MCF 10A (cell line): ENCODE measurements at regions of chr2 and their contacts with region 1.

Region 1: GRCh38 chr2:103161456-103162289 is 399.8 kb downstream of the TMEM182 start:
- DNase-seq: peak; percentile 70
- H3K4me3 Mint-ChIP-seq: no peak overlapping the region
- H3K27ac Mint-ChIP-seq: peak overlapping the region; percentile 33
- H3K4me1 Mint-ChIP-seq: peaks cover 11% of the 10 kb centered on the region
- H3K27me3 Mint-ChIP-seq: peaks cover 61% of the 10 kb centered on the region
- CTCF ChIP-seq: peak; percentile 93

Region 2: DNA sequence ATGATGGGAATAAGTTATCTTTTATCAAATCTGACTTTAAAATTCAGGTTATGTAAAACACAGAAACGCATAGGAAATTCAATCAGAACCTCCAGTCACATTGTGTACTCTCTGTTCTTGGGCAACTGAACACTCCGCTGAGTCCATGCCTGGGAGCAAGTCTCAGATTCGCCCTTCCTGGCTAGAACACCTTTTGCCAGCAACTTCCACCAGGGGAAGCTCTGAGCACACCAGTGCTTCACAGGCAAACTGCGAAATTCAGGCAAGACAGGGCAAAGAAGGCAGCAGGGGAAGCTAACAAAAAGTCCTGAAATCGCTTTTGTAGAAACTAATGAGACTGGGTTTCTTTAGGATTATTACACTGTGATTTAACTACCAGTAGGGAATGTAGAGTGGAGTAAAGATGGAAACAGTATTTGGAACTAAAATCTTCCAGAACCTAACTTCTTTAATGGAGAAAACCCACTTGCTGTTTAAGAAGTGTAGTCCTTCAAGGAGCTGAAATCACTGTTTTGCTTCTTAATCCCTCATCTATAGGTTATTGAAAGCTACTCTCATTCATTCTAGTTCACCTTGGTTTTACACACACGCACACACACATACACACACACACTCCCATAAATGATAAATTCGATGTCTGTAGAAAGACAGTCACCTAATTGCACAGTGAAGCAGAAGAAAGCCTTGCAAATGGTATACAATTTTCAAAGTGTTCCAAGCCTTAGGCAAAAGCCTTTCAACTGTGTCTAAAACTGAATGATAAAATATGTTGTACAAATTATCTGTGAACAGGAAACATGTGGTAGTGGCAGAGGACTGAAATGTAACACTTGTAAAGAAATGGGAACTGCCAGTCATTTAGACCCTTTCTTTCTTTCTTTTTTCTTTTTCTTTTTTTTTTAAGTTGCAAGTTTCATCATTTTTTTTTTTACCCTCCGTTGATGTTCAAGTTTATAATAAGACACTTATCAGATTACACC is 185.4 kb before region 1 on chr2:
- CTCF ChIA-PET with region 1: interaction called, 11 read pairs
- POLR2A ChIA-PET with region 1: no interaction called
- intact Hi-C with region 1: loop called (anchors 2 kb)
- DNase-seq: peak; percentile 78
- H3K4me3 Mint-ChIP-seq: no peak overlapping the region
- H3K27ac Mint-ChIP-seq: no peak overlapping the region
- H3K4me1 Mint-ChIP-seq: peaks cover 7% of the 10 kb centered on the region
- H3K27me3 Mint-ChIP-seq: no peaks in the 10 kb centered on the region
- CTCF ChIP-seq: peak; percentile 79

Region 3: DNA sequence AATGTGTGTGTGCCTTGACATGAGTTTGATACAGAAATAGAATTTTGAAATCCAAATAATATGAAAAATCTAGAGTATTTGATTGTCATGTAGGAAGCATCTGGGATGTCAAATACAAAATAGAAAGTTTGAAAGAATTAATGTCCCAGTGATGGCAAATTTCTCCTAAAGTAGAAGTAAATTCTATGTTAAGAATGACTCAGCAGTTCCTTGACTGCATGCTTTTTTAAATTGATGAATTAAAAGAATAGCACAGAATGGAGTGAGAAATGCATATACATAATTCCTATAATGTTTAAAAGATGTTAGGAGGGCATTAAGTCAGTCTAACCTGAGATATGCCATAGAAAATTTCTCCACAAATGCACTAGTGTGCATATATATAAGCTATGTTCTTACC is 42.3 kb before region 1 on chr2:
- CTCF ChIA-PET with region 1: no interaction called
- POLR2A ChIA-PET with region 1: no interaction called
- intact Hi-C with region 1: no loop called
- DNase-seq: no peak
- H3K4me3 Mint-ChIP-seq: no peak overlapping the region
- H3K27ac Mint-ChIP-seq: no peak overlapping the region
- H3K4me1 Mint-ChIP-seq: no peaks in the 10 kb centered on the region
- H3K27me3 Mint-ChIP-seq: peaks cover 53% of the 10 kb centered on the region
- CTCF ChIP-seq: no peak

Region 4: DNA sequence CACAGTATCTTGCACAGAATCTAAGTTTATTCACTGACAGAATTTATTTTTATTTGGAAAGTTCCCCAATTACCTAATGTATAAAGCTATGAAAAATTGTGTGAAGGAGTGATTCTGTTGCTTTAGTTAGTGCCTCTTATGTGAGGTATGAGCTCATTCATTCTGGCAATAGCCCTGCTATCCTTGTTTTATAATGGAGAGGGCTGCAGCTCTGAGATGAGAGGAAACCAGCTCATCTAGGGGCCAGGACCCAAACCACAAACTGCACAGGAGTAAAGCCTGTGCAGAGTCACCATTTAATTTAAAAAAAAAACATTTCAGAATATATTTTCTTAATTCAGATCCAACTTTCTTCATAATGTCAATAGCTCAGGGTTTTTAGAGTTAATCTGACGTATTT is 16.8 kb before region 1 on chr2:
- CTCF ChIA-PET with region 1: interaction called, 20 read pairs
- POLR2A ChIA-PET with region 1: interaction called, 3 read pairs
- intact Hi-C with region 1: no loop called
- DNase-seq: no peak
- H3K4me3 Mint-ChIP-seq: no peak overlapping the region
- H3K27ac Mint-ChIP-seq: no peak overlapping the region
- H3K4me1 Mint-ChIP-seq: no peaks in the 10 kb centered on the region
- H3K27me3 Mint-ChIP-seq: peaks cover 59% of the 10 kb centered on the region
- CTCF ChIP-seq: no peak

Region 5: DNA sequence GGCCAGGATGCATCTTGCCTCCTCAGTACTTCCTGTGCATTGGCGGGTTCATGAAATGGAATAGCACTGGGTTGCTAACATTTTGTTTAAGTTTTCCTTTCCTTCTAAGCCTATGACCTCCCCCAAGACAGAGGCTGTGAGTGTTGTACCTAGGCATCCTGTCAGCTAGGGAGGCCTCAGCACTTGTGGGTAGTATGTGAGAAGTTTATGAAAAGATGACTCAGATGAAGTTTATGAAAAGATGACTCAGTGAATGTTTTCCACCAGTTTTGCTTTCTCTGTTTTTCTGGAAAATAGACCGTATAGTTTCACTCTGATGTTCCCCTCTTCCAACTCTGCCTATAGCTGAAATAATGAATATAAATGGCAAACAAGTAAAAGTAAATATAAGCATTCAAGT is 13.0 kb after region 1 on chr2:
- CTCF ChIA-PET with region 1: interaction called, 15 read pairs
- POLR2A ChIA-PET with region 1: interaction called, 6 read pairs
- intact Hi-C with region 1: no loop called
- DNase-seq: peak; percentile 38
- H3K4me3 Mint-ChIP-seq: no peak overlapping the region
- H3K27ac Mint-ChIP-seq: no peak overlapping the region
- H3K4me1 Mint-ChIP-seq: peaks cover 19% of the 10 kb centered on the region
- H3K27me3 Mint-ChIP-seq: peaks cover 37% of the 10 kb centered on the region
- CTCF ChIP-seq: no peak

Region 6: GRCh38 chr2:103959174-103960128 is 797.8 kb after region 1 on chr2:
- CTCF ChIA-PET with region 1: interaction called, 13 read pairs
- POLR2A ChIA-PET with region 1: no interaction called
- intact Hi-C with region 1: loop called (anchors 1 kb)
- DNase-seq: peak; percentile 50
- H3K4me3 Mint-ChIP-seq: no peak overlapping the region
- H3K27ac Mint-ChIP-seq: no peak overlapping the region
- H3K4me1 Mint-ChIP-seq: no peaks in the 10 kb centered on the region
- H3K27me3 Mint-ChIP-seq: peaks cover 79% of the 10 kb centered on the region
- CTCF ChIP-seq: peak; percentile 65

Region 7: GRCh38 chr2:104849618-104850141 is 1688.0 kb after region 1 on chr2:
- CTCF ChIA-PET with region 1: interaction called, 30 read pairs
- POLR2A ChIA-PET with region 1: no interaction called
- intact Hi-C with region 1: no loop called
- DNase-seq: peak; percentile 73
- H3K4me3 Mint-ChIP-seq: no peak overlapping the region
- H3K27ac Mint-ChIP-seq: no peak overlapping the region
- H3K4me1 Mint-ChIP-seq: peaks cover 26% of the 10 kb centered on the region
- H3K27me3 Mint-ChIP-seq: peaks cover 92% of the 10 kb centered on the region
- CTCF ChIP-seq: peak; percentile 86

Region 8: GRCh38 chr2:104944495-104944894 is 1782.8 kb after region 1 on chr2:
- CTCF ChIA-PET with region 1: interaction called, 25 read pairs
- POLR2A ChIA-PET with region 1: no interaction called
- intact Hi-C with region 1: loop called (anchors 1 kb)
- DNase-seq: peak; percentile 66
- H3K4me3 Mint-ChIP-seq: no peak overlapping the region
- H3K27ac Mint-ChIP-seq: no peak overlapping the region
- H3K4me1 Mint-ChIP-seq: peaks cover 6% of the 10 kb centered on the region
- H3K27me3 Mint-ChIP-seq: no peaks in the 10 kb centered on the region
- CTCF ChIP-seq: peak; percentile 62